Activated T-helper 1 cell treated with anti-CD3 and anti-CD28 coated beads, Interleukin-12 subunit alpha, Interleukin-12 subunit beta, Interleukin-2, Interleukin-4 antibody, amounts not matched to agents 30 ng/mL and 10 ng/mL and 1 ng/mL, durations not matched to agents 14 hours and 24 hours and 36 hours (primary cell): ENCODE measurements at regions of chr15 and their contacts with region 1.

Region 1: GRCh38 chr15:58269455-58270414 is 131.6 kb downstream of the AQP9 start:
- DNase-seq: peak; percentile 28
- H3K4me3 Mint-ChIP-seq: peak overlapping the region; percentile 6
- H3K27ac Mint-ChIP-seq: peak overlapping the region; percentile 6
- H3K4me1 Mint-ChIP-seq: peaks cover 16% of the 10 kb centered on the region
- H3K27me3 Mint-ChIP-seq: peaks cover 5% of the 10 kb centered on the region

Region 2: GRCh38 chr15:58292751-58293175 is 23.0 kb after region 1 on chr15:
- intact Hi-C with region 1: loop called (anchors 2 kb)
- DNase-seq: no peak
- H3K4me3 Mint-ChIP-seq: no peak overlapping the region
- H3K27ac Mint-ChIP-seq: peak overlapping the region; percentile 61
- H3K4me1 Mint-ChIP-seq: peaks cover 48% of the 10 kb centered on the region
- H3K27me3 Mint-ChIP-seq: peaks cover 2% of the 10 kb centered on the region

Region 3: DNA sequence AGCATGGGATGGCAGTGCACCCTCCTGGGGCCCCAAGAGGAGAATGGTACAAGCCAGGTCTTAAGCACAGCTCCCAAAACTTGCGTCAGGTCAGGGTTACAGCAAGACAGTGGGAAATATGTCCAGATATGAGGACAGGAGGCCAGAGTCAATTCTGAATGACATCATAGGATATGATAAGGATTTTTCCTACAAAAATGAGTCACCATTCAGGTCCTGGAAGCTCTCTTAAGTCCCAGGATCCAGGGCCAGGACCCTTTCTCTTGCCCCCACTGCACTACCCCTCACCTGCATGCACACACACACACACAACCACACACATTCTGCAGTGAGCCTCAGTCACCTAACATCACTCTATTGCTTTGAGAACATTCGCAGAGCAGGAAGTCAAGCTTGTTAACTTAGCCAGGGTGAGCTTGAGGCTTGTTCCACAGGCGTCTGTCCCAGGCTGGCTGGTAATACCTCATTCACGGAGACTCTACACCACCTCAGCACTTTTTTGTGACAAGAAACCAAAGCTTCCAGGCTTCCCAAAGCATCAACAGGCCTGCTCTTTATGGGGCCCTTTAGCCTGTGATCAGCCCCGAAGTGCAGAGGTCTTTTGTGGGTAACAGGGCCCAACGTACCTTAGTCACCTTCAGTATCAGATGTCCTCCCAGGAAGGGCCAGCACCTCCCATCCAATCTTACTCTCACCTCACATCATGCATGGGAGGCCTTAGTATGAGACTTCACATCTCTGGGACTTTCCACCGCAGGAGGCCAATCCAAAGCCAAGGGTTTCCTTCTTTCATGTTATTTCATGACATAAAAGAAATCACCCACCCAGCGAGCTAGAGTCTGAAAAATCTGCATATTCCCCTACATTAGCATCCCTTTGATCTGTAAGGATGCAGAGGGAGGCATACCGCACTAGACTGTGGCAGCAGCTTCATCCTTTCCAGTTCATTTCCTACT is 88.1 kb after region 1 on chr15:
- intact Hi-C with region 1: loop called (anchors 5 kb)
- DNase-seq: peak; percentile 35
- H3K4me3 Mint-ChIP-seq: peak overlapping the region; percentile 17
- H3K27ac Mint-ChIP-seq: peak overlapping the region; percentile 85
- H3K4me1 Mint-ChIP-seq: peaks cover 40% of the 10 kb centered on the region
- H3K27me3 Mint-ChIP-seq: peaks cover 2% of the 10 kb centered on the region

Region 4: DNA sequence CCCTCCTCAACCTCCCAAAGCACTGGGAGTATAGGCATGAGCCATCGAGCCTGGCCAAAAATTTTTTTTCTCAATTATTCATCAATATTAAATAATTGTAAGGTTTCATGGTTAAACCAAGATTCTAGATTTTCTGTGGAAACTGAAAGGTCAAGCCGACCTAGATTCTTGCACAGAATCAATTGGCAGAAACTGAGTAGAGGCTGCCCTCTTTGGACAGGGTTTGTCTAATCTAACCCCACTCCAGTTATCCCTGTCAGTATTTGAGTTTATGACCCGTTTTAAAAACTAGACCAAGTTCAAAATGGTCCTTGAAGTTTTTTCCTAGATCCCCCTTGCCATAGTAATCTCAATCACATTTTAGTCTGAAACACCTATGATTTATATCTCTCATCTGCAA is 488.4 kb after region 1 on chr15:
- intact Hi-C with region 1: loop called (anchors 1 kb)
- DNase-seq: no peak
- H3K4me3 Mint-ChIP-seq: no peak overlapping the region
- H3K27ac Mint-ChIP-seq: no peak overlapping the region
- H3K4me1 Mint-ChIP-seq: peaks cover 5% of the 10 kb centered on the region
- H3K27me3 Mint-ChIP-seq: peaks cover 6% of the 10 kb centered on the region